GM12878 (cell line): ENCODE measurements at regions of chr6 and their contacts with region 1.

Region 1: DNA sequence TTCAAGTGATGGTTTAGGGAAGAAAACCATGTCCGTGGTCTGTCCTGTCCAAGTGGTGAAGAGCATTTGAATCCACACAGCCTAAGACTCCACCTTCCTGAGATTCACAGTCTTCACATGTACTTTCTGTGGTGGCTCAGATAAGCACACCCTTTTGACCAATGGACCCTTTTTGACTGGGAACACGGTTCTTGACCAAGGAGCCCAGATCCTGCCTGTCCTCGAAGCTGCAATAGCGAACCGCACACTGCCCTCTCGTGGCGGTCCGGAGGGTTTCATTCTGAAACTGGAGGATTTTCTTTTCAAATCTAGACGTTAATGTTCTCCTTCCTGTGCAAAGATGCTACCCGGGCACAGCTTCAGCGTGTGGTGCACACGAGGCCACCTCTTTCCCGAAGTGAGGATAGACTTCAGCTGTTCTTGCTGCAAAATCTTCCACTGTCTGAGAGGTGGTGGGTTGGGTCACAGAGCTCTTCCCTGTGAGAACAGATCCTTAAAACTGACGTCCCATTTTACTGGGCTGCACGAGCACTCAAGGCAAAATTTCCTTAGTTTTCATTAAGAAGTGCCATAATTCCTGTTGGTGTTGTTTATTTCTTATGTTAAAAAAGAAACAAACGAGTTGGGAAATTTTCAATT is 90.5 kb downstream of the SYNJ2 start:
- DNase-seq: peak; percentile 23
- ATAC-seq: peak; percentile 92
- H3K4me3 ChIP-seq: no peak overlapping the region
- H3K27ac ChIP-seq: no peak overlapping the region
- H3K4me1 ChIP-seq: no peaks in the 10 kb centered on the region
- H3K27me3 ChIP-seq: no peaks in the 10 kb centered on the region
- CTCF ChIP-seq: peak; percentile 81 to 87 (median 86)
- EP300 ChIP-seq: no peak
- POLR2A ChIP-seq: no peak
- RAD21 ChIP-seq: peak; percentile 85

Region 2: DNA sequence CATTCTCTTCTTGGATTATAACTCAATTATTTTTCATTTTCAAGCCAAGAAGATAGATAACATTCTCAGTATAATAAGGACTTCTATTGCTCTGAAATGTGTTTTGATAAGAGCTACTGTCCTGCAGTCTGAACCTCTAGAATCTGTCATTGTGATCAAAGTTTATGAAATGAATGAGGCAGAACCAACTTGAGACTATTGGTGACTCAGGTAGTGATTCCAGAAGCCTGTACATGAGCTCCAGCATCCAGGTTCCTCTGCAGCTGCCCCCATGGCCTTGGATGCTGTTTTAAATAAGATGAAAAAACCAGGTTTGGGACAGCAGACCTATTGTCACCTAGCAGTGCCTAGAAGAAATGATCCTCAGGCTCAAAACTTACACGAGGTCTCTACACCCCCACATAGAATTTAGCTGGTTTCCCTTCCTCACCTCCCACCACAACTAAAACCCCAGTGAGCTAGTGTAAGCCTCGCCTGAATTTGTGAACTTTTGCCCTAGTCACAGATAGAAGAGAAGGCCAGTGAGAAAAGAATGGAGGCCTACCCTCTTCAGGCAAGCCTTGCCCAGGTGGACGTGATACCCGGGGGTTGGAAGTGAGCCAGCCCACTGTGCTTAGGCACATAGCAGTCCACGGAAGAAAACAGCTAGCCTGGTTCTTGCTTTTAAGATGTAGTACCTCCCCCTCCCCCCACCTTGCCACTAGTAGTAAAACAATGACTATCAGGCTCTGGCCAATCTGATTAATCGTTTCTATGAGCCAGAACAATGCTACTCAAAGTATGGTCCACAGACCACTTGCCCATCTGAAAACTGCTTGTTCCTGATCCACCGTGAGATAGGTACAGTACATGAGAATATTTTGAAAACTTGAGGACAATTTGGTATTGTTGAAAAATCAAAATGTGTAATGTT is 163.6 kb before region 1 on chr6:
- CTCF ChIA-PET with region 1: no interaction called
- POLR2A ChIA-PET with region 1: no interaction called
- RAD21 ChIA-PET with region 1: interaction called, 3 read pairs
- SMC1A ChIA-PET with region 1: no interaction called
- in situ Hi-C with region 1: no loop called
- intact Hi-C with region 1: loop called (anchors 10 kb)
- DNase-seq: peak; percentile 42
- ATAC-seq: peak; percentile 78
- H3K4me3 ChIP-seq: no peak overlapping the region
- H3K27ac ChIP-seq: peak overlapping the region; percentile 11; the same call in 1 of the 2 replicates
- H3K4me1 ChIP-seq: peaks cover 17% of the 10 kb centered on the region
- H3K27me3 ChIP-seq: no peaks in the 10 kb centered on the region
- CTCF ChIP-seq: no peak
- EP300 ChIP-seq: 0 out of 4 replicates have a peak, but pooled peaks of 1 of the 2 experiments have one; percentile 37
- POLR2A ChIP-seq: no peak
- RAD21 ChIP-seq: no peak

Region 3: DNA sequence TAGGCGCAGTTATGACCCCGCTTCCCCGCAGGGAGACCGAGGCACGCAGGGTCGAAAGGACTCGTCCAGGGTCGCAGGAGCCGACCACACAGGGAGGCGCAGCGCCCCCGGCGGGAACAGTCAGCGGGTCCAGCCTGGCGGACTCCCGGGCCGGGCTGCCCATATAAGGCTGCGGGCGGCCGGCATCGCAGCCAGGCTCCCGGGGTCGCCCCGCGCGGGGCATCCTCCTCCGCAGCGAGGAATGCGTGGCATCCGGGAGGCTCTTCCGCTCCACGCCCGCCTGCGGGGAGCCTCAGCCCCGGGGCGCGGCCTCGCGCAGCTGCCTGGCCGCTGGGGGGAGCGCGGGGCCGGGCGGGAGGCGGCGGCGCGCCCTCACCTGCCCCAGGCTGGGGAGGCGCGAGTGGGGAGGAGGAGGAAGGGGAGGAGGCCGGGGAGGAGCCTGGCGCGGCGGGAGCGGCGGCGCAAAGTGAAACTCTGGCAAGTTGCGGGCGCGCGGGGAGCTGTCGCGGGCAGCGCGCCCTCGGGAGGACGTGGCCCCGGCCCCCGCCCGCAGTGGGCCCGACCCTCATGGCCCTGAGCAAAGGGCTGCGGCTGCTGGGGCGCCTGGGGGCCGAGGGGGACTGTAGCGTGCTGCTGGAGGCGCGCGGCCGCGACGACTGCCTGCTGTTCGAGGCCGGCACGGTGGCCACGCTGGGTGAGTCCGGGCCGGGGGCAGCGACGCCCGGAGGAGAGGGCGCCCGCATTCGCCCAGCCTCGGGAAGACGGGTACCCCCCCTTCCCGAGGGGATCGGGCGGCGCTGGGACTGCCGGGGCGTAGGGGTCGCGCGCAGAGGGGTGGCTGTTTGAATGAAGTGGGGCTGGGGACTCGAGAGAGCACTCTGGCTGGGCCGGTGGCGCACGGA is 90.6 kb before region 1 on chr6 and contains the start of gene SYNJ2:
- CTCF ChIA-PET with region 1: interaction called, 4 read pairs
- POLR2A ChIA-PET with region 1: no interaction called
- RAD21 ChIA-PET with region 1: interaction called, 3 read pairs
- SMC1A ChIA-PET with region 1: interaction called, 3 read pairs
- in situ Hi-C with region 1: no loop called
- intact Hi-C with region 1: loop called (anchors 1 kb)
- DNase-seq: no peak
- ATAC-seq: peak; percentile 90
- H3K4me3 ChIP-seq: peak within 1 kb of the TSS; percentile 70
- H3K27ac ChIP-seq: peak within 1 kb of the TSS; percentile 43; the same call in 1 of the 2 replicates
- H3K4me1 ChIP-seq: peaks cover 3% of the 10 kb centered on the region; the same call in 1 of the 2 replicates
- H3K27me3 ChIP-seq: peaks cover 4 to 10% of the 10 kb centered on the region in 2 experiments; a peak in 3 of 4 replicates
- CTCF ChIP-seq: peak in 2 of 3 experiments; percentile 35 to 53
- EP300 ChIP-seq: no peak
- POLR2A ChIP-seq: no peak; the same call in 1 of the 2 replicates
- RAD21 ChIP-seq: no peak
- polyA plus RNA-seq, gene SYNJ2: 0.11 to 0.60 TPM

Region 4: DNA sequence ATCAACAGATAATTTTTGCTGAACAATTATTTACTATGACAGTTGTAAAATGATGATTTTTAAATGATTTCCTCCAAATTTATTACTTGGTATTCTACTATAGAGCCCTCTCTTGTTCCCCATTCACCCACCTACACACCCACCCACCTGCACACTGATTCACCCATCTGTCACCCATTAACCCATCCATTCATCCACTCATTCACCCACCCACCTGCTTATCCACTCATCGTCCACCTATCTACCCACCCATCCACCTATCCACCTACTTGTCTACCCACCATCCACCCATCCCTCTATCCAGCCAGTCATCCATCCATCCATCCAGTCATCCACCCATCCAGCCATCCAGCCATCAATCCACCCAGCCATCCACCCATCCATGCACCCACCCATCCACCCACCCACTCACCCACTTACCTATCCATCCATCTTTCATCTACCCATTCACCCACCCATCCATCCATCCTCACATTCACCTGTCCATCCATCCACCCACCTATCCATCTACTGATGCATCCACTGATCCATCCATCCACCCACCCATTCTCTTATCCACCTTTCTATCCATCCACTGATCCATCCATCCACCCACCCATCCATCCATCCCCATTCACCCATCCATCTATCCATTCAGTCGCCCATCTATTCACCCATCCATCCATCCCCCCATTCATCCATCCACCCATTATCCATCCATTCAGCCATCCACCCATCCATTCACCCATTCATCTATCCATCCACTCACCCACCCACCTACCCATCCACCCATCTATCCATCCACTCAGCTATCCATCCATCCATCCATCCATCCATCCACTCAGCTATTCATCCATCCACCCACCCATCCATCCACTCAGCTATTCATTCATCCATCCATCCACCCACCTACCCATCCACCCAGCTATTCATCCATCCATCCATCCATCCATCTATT is 18.6 kb before region 1 on chr6:
- CTCF ChIA-PET with region 1: interaction called, 10 read pairs
- POLR2A ChIA-PET with region 1: no interaction called
- RAD21 ChIA-PET with region 1: no interaction called
- SMC1A ChIA-PET with region 1: no interaction called
- in situ Hi-C with region 1: no loop called
- intact Hi-C with region 1: no loop called
- DNase-seq: no peak
- ATAC-seq: no peak
- H3K4me3 ChIP-seq: no peak overlapping the region
- H3K27ac ChIP-seq: no peak overlapping the region
- H3K4me1 ChIP-seq: no peaks in the 10 kb centered on the region; the same call in 1 of the 2 replicates
- H3K27me3 ChIP-seq: no peaks in the 10 kb centered on the region
- CTCF ChIP-seq: no peak
- EP300 ChIP-seq: no peak
- POLR2A ChIP-seq: no peak
- RAD21 ChIP-seq: no peak